Prostate gland (tissue), 2 donors: ENCODE measurements at regions of chr10 and their contacts with region 1.

Region 1: GRCh38 chr10:109846832-109847231 is 76.5 kb downstream of the XPNPEP1 start:
- DNase-seq: no peak
- H3K4me3 ChIP-seq: no peak overlapping the region
- H3K27ac ChIP-seq: no peak overlapping the region
- H3K4me1 ChIP-seq: no peaks in the 10 kb centered on the region
- H3K27me3 ChIP-seq: no peaks in the 10 kb centered on the region
- CTCF ChIP-seq: no peak
- POLR2A ChIP-seq: no peak

Region 2: GRCh38 chr10:108911814-108912541 is 934.9 kb before region 1 on chr10:
- intact Hi-C with region 1: loop called (anchors 10 kb)
- DNase-seq: no peak
- H3K4me3 ChIP-seq: peak overlapping the region; percentile 11 to 17
- H3K27ac ChIP-seq: no peak overlapping the region
- H3K4me1 ChIP-seq: no peaks in the 10 kb centered on the region
- H3K27me3 ChIP-seq: peaks cover 3% of the 10 kb centered on the region
- CTCF ChIP-seq: peak in 1 of 4 experiments; percentile 8
- POLR2A ChIP-seq: no peak

Region 3: GRCh38 chr10:109726473-109726872 is 120.4 kb before region 1 on chr10:
- intact Hi-C with region 1: no loop called
- DNase-seq: no peak
- H3K4me3 ChIP-seq: no peak overlapping the region
- H3K27ac ChIP-seq: no peak overlapping the region
- H3K4me1 ChIP-seq: no peaks in the 10 kb centered on the region
- H3K27me3 ChIP-seq: no peaks in the 10 kb centered on the region
- CTCF ChIP-seq: no peak
- POLR2A ChIP-seq: no peak